ENCODE measurements at regions of chr1 and their contacts with region 1.

Region 1: DNA sequence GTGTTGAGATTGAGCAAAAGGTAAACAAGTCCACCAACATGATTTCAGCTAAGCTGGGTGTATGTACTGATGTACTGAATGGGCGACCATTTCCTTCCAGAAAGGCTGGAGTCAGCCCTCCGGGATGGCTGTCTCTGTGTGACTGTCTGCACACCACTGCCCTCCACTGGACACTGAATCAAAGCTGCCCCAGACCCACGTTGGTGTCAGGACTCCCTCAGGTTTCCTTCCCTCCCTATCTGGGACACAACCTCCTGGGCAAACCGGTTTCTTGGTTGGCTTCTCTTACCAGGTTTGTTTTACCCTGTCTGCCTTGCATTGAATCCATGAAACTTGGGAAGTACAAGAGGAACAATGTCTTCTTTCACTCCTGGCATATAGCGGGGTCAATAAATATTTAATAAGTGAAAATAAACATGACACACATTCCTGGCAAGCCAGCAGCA is 5.3 kb upstream of the SRP9 start:
- DNase-seq: peak; percentile 92
- H3K4me3 ChIP-seq: no peak overlapping the region
- H3K27ac ChIP-seq: no peak overlapping the region
- H3K4me1 ChIP-seq: no peaks in the 10 kb centered on the region
- H3K27me3 ChIP-seq: no peaks in the 10 kb centered on the region
- CTCF ChIP-seq: peak; percentile 80

Region 2: DNA sequence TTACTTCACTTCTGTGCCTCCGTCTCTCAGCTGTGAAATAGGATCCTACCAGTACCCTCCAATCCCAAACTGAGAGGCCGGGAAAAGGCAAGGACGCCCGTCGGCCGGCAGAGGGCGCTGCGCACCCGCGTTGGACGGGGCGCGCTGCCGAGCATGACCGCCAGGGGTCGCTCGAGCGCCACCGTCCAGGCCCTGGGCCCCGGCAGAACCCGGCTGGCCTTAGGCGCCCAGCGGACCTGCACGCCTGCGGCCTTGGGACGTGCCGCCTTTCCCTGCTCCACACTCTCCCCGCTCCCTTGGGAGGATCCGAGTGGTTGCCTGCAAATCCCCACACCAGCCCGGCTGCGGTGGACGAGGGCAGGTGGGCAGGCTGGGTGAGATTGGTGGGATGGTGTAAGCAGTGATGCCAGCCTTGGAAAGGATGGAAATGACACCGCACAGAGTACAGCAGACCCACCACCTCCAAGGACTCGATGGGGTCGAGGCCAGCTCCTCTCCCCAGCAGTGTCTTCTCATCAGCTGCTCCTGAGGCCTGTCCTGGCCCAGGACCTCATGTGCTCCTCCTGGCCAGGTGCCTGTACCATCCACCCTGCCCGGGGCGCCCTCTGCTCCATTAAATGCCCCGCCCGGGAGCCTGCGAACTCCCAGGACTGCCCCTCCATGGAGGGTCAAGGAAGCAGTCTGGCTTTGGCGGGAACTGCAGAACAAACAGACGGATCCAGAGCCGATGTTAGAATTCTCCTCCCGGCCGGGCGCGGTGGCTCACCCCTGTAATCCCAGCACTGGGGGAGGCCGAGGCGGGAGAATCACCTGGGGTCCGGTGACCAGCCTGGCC is 297.1 kb before region 1 on chr1:
- intact Hi-C with region 1: loop called (anchors 2 kb)
- DNase-seq: peak; percentile 58
- H3K4me3 ChIP-seq: no peak overlapping the region
- H3K27ac ChIP-seq: no peak overlapping the region
- H3K4me1 ChIP-seq: no peaks in the 10 kb centered on the region
- H3K27me3 ChIP-seq: no peaks in the 10 kb centered on the region
- CTCF ChIP-seq: peak; percentile 100

Region 3: DNA sequence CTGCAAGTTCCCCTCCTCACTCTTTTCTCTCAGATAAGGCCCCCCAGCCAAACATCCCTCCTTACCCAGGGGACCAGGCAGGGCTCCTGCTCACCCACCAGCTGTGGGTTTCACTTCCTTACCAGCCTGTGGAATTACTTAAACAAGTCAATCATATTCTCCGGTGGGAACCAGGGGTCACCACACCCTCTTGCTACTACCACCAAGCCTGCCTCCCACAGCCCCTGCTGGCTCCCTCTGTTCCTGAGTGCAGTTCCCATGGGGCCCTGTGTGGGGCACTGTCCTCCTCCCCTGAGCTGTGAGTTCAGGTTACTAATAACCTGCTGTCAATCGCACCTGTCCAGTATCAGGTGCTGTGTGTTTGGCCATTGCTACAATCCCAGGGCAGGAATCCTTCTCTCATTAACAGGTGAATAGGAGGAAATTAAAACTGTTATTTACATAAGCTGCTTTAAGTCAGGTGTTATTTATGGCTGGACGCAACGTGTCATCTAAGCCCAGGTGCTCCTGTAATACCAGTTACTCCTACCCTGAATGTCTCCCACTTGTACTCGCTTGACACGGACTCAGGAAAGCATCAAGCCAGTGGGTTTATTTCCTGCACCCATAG is 291.4 kb before region 1 on chr1:
- intact Hi-C with region 1: loop called (anchors 1 kb)
- DNase-seq: peak; percentile 83
- H3K4me3 ChIP-seq: no peak overlapping the region
- H3K27ac ChIP-seq: no peak overlapping the region
- H3K4me1 ChIP-seq: peaks cover 7% of the 10 kb centered on the region
- H3K27me3 ChIP-seq: no peaks in the 10 kb centered on the region
- CTCF ChIP-seq: peak; percentile 96

Region 4: GRCh38 chr1:225554216-225554812 is 218.0 kb before region 1 on chr1:
- intact Hi-C with region 1: loop called (anchors 5 kb)
- DNase-seq: no peak
- H3K4me3 ChIP-seq: no peak overlapping the region
- H3K27ac ChIP-seq: no peak overlapping the region
- H3K4me1 ChIP-seq: no peaks in the 10 kb centered on the region
- H3K27me3 ChIP-seq: no peaks in the 10 kb centered on the region
- CTCF ChIP-seq: peak; percentile 53

Region 5: GRCh38 chr1:225652729-225653462 is 119.5 kb before region 1 on chr1 and contains the start of gene ENAH:
- intact Hi-C with region 1: loop called (anchors 5 kb)
- DNase-seq: peak; percentile 72
- H3K4me3 ChIP-seq: peak within 1 kb of the TSS; percentile 85
- H3K27ac ChIP-seq: peak within 1 kb of the TSS; percentile 86
- H3K4me1 ChIP-seq: no peaks in the 10 kb centered on the region
- H3K27me3 ChIP-seq: no peaks in the 10 kb centered on the region
- CTCF ChIP-seq: no peak
- total RNA-seq, gene ENAH: 43.5 to 63.7 TPM

Region 6: GRCh38 chr1:225911191-225912130 is 139.1 kb after region 1 on chr1:
- intact Hi-C with region 1: loop called (anchors 5 kb)
- DNase-seq: peak; percentile 71
- H3K4me3 ChIP-seq: no peak overlapping the region
- H3K27ac ChIP-seq: no peak overlapping the region
- H3K4me1 ChIP-seq: peaks cover 7% of the 10 kb centered on the region
- H3K27me3 ChIP-seq: no peaks in the 10 kb centered on the region
- CTCF ChIP-seq: peak; percentile 97

Measured in colonic mucosa (tissue), 4 donors.